ENCODE measurements at regions of chr2 and their contacts with region 1.

Region 1: DNA sequence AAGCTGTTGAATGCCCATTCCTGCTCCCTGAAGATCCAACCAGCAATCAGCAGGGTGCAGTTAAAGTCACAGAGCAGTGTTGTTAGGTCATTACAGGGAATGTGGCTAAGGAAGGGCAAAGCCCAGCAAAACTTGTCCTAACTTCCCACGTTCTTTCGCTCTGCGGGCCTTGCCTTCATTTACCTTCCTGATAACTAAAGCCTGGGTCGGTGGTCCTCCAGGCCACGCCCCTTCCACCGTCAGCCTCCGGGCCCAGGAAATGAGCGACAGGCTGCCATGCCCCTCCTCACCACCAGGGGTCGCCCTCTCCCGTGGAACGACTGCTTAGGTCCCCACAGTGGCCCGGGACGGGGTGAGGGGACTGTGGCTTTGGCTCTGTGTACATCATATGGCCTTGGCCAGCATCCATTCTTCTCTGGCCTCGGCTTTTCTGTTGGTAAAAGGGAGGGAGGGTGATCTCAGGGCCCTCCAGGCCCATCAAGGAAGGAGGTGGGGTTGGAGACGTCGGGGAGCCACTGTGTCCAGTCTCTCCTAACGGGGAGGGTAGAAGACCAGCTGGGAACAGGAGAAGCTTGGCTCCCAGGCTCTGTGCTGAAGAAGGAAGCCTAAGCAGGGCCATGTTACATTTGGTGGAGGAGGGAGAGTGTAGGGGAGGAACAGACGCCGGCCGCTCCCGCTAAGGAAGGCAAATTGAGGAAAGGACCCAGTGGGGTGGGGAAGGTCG is 2.2 kb downstream of the SH2D6 start:
- DNase-seq: peak; percentile 85 to 89
- H3K4me3 ChIP-seq: no peak overlapping the region
- H3K27ac ChIP-seq: peak overlapping the region; percentile 65 to 77
- H3K4me1 ChIP-seq: peaks cover 0 to 8% of the 10 kb centered on the region in 2 donors
- H3K27me3 ChIP-seq: no peaks in the 10 kb centered on the region
- CTCF ChIP-seq: peak; percentile 100
- POLR2A ChIP-seq: peak in 1 of 2 donors; percentile 26

Region 2: GRCh38 chr2:85551698-85552678 is 131.3 kb after region 1 on chr2:
- intact Hi-C with region 1: loop called (anchors 2 kb)
- DNase-seq: peak; percentile 82 to 85
- H3K4me3 ChIP-seq: no peak overlapping the region
- H3K27ac ChIP-seq: peak overlapping the region in 1 of 2 donors; percentile 24
- H3K4me1 ChIP-seq: no peaks in the 10 kb centered on the region
- H3K27me3 ChIP-seq: no peaks in the 10 kb centered on the region
- CTCF ChIP-seq: peak; percentile 81 to 97 (median 91)
- POLR2A ChIP-seq: peak in 1 of 2 donors; percentile 16

Measured in uterus (tissue), 4 donors.